Endothelial cell of umbilical vein (primary cell): ENCODE measurements at regions of chr20 and their contacts with region 1.

Region 1: GRCh38 chr20:20989081-20989480 is 117.1 kb downstream of the LINC00237 start:
- DNase-seq: no peak
- H3K4me3 ChIP-seq: no peak overlapping the region
- H3K27ac ChIP-seq: no peak overlapping the region
- H3K4me1 ChIP-seq: no peaks in the 10 kb centered on the region
- H3K27me3 ChIP-seq: no peaks in the 10 kb centered on the region
- CTCF ChIP-seq: no peak
- POLR2A ChIP-seq: no peak

Region 2: GRCh38 chr20:19552134-19552835 is 1436.8 kb before region 1 on chr20:
- CTCF ChIA-PET with region 1: no interaction called
- POLR2A ChIA-PET with region 1: no interaction called
- dilution Hi-C with region 1: no loop called
- intact Hi-C with region 1: loop called (anchors 5 kb)
- DNase-seq: no peak
- H3K4me3 ChIP-seq: no peak overlapping the region
- H3K27ac ChIP-seq: no peak overlapping the region
- H3K4me1 ChIP-seq: no peaks in the 10 kb centered on the region
- H3K27me3 ChIP-seq: no peaks in the 10 kb centered on the region
- CTCF ChIP-seq: no peak
- POLR2A ChIP-seq: no peak

Region 3: DNA sequence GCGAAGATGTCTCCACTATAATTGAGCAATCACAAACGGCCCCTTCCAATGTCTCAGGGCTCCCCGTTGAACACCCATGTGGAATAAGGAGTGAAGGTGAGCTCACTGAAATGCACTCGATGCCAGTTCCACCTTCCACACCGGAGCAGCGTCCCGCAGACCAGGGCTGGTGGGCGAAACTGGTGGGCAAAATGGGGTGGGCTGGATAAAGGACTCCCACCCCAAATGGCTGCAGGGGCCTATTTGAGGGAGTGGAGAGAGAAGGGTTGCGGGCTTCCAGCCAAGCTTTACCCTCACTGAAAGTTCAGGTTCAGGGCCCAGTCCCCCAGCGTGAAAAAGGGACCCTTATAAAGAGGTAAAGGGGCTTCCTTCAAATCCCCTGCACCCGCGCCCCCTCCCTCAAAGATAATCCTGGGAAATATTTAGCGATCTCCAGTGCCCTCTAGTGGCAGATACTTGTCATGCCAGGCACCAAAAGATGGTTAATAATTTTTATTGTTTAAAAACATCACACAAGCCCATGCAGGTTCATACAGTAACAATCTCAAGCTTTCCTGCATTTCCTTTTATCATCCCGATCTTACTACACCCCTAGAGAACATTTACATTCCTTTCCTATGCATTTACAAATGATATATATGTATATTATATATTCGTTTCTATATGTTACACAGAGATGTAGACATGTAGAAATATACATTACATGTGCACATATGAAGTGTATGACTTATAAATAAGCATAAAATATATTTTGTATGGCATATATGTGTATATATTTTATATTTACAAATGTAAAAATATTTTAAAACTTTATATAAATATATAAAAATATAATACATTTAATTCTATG is 583.0 kb after region 1 on chr20:
- CTCF ChIA-PET with region 1: no interaction called
- POLR2A ChIA-PET with region 1: no interaction called
- dilution Hi-C with region 1: no loop called
- intact Hi-C with region 1: no loop called
- DNase-seq: peak; percentile 18
- H3K4me3 ChIP-seq: no peak overlapping the region
- H3K27ac ChIP-seq: no peak overlapping the region
- H3K4me1 ChIP-seq: no peaks in the 10 kb centered on the region
- H3K27me3 ChIP-seq: no peaks in the 10 kb centered on the region
- CTCF ChIP-seq: peak; percentile 63 to 85
- POLR2A ChIP-seq: no peak